ENCODE measurements at regions of chr12 and their contacts with region 1.

Region 1: DNA sequence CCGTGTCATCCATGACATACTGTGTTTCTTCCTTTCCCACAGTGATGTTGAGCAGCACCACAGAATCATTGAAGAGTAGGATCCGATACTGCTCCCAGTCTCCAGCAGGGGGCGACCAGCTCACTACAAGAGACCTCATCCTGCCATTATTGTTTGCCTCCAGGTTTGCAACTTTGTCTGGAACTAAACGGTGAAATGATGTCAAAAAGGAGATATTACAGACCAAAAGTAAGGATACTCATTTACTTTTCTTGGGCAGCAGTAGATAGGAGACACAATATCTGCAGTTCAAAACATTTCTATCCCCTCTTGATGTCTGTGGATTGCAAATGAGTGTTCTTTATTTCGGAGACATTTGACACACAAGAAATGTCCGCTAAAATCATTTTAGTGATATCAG is 47.2 kb downstream of the PTPRB start:
- DNase-seq: peak; percentile 63 to 70 (median 68)
- ATAC-seq: peak; percentile 90 to 95 (median 94)
- H3K4me3 ChIP-seq: no peak overlapping the region
- H3K27ac ChIP-seq: no peak overlapping the region
- H3K4me1 ChIP-seq: no peaks in the 10 kb centered on the region
- H3K27me3 ChIP-seq: no peaks in the 10 kb centered on the region
- CTCF ChIP-seq: peak; percentile 68 to 89 (median 84)
- POLR2A ChIP-seq: no peak

Region 2: GRCh38 chr12:70096759-70097410 is 493.2 kb before region 1 on chr12:
- intact Hi-C with region 1: no loop called
- DNase-seq: no peak
- ATAC-seq: no peak
- H3K4me3 ChIP-seq: no peak overlapping the region
- H3K27ac ChIP-seq: no peak overlapping the region
- H3K4me1 ChIP-seq: no peaks in the 10 kb centered on the region
- H3K27me3 ChIP-seq: no peaks in the 10 kb centered on the region
- CTCF ChIP-seq: no peak
- POLR2A ChIP-seq: no peak

Region 3: GRCh38 chr12:70719672-70720420 is 129.8 kb after region 1 on chr12:
- intact Hi-C with region 1: loop called (anchors 5 to 10 kb)
- DNase-seq: peak in 1 of 3 donors; percentile 47
- ATAC-seq: peak; percentile 65 to 74 (median 68)
- H3K4me3 ChIP-seq: peak overlapping the region in 1 of 3 donors; percentile 4
- H3K27ac ChIP-seq: peak overlapping the region in 1 of 3 donors; percentile 36
- H3K4me1 ChIP-seq: no peaks in the 10 kb centered on the region
- H3K27me3 ChIP-seq: no peaks in the 10 kb centered on the region
- CTCF ChIP-seq: peak; percentile 67 to 89 (median 84)
- POLR2A ChIP-seq: no peak

Measured in right lobe of liver (tissue), 6 donors.